ENCODE measurements at regions of chr5 and their contacts with region 1.

Region 1: DNA sequence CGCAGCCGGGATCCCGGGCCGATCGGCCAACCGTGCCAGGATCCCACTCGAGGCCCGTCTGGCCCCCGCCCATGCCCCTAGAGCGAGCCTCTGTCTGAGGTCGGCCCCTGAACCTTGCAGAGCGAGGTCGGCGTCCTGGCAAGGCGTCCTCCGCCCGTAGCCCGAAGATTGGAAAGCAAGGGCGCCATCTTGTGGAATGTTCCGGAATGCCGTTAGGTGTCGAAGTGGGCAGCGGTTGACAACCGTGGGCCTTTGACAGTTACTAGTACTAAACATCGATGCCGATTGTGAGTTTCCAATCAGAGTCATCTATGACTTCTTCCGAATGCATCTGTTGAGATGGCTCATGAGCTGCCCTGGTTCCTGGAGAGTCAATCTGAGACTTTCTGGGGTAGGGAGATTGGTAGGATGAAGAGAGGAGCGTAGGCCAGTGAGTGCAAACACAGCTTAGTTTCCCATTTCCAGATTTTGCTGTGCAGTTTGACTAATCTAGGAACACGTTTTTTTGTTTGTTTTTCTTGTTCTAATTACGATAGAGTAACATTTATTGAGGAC is 923 bp upstream of the PLK2 start:
- DNase-seq: peak; percentile 80 to 94 (median 89)
- ATAC-seq: peak; percentile 69
- H3K4me3 ChIP-seq: peak overlapping the region; percentile 93
- H3K4me3 Mint-ChIP-seq: peak overlapping the region; percentile 92
- H3K27ac ChIP-seq: peak overlapping the region; percentile 74 to 79
- H3K27ac Mint-ChIP-seq: peak overlapping the region; percentile 76
- H3K4me1 ChIP-seq: peaks cover 24% of the 10 kb centered on the region
- H3K4me1 Mint-ChIP-seq: peaks cover 17% of the 10 kb centered on the region
- H3K27me3 ChIP-seq: peaks cover 0 to 5% of the 10 kb centered on the region in 2 experiments
- H3K27me3 Mint-ChIP-seq: peaks cover 17% of the 10 kb centered on the region
- CTCF ChIP-seq: peak; percentile 80

Region 2: GRCh38 chr5:56900858-56901578 is 1559.8 kb before region 1 on chr5:
- CTCF ChIA-PET with region 1: interaction called, 3 read pairs
- POLR2A ChIA-PET with region 1: no interaction called
- intact Hi-C with region 1: loop called (anchors 2 kb)
- DNase-seq: peak in 7 of 14 experiments; percentile 2 to 75 (median 59)
- ATAC-seq: peak; percentile 68
- H3K4me3 ChIP-seq: no peak overlapping the region
- H3K4me3 Mint-ChIP-seq: no peak overlapping the region
- H3K27ac ChIP-seq: no peak overlapping the region
- H3K27ac Mint-ChIP-seq: no peak overlapping the region
- H3K4me1 ChIP-seq: peaks cover 4% of the 10 kb centered on the region
- H3K4me1 Mint-ChIP-seq: no peaks in the 10 kb centered on the region
- H3K27me3 ChIP-seq: no peaks in the 10 kb centered on the region
- H3K27me3 Mint-ChIP-seq: no peaks in the 10 kb centered on the region
- CTCF ChIP-seq: peak; percentile 75

Region 3: GRCh38 chr5:57173185-57174127 is 1287.4 kb before region 1 on chr5 and contains the start of gene GPBP1:
- CTCF ChIA-PET with region 1: no interaction called
- POLR2A ChIA-PET with region 1: interaction called, 6 read pairs
- intact Hi-C with region 1: loop called in 1 of 2 experiments (anchors 5 kb)
- DNase-seq: peak; percentile 94 to 100 (median 97)
- ATAC-seq: peak; percentile 70
- H3K4me3 ChIP-seq: peak within 1 kb of the TSS; percentile 91
- H3K4me3 Mint-ChIP-seq: peak within 1 kb of the TSS; percentile 98
- H3K27ac ChIP-seq: peak within 1 kb of the TSS; percentile 100
- H3K27ac Mint-ChIP-seq: peak within 1 kb of the TSS; percentile 96
- H3K4me1 ChIP-seq: peaks cover 19% of the 10 kb centered on the region
- H3K4me1 Mint-ChIP-seq: peaks cover 41% of the 10 kb centered on the region
- H3K27me3 ChIP-seq: no peaks in the 10 kb centered on the region
- H3K27me3 Mint-ChIP-seq: no peaks in the 10 kb centered on the region
- CTCF ChIP-seq: no peak
- total RNA-seq, gene GPBP1: 136 to 137 TPM

Region 4: GRCh38 chr5:57298295-57298984 is 1162.4 kb before region 1 on chr5:
- CTCF ChIA-PET with region 1: interaction called, 17 read pairs
- POLR2A ChIA-PET with region 1: interaction called, 31 read pairs
- intact Hi-C with region 1: loop called (anchors 1 kb)
- DNase-seq: peak; percentile 66 to 93 (median 81)
- ATAC-seq: peak; percentile 87
- H3K4me3 ChIP-seq: peak overlapping the region; percentile 53
- H3K4me3 Mint-ChIP-seq: peak overlapping the region; percentile 68
- H3K27ac ChIP-seq: peak overlapping the region in 1 of 2 donors; percentile 11
- H3K27ac Mint-ChIP-seq: peak overlapping the region; percentile 64
- H3K4me1 ChIP-seq: peaks cover 13% of the 10 kb centered on the region
- H3K4me1 Mint-ChIP-seq: peaks cover 23% of the 10 kb centered on the region
- H3K27me3 ChIP-seq: no peaks in the 10 kb centered on the region
- H3K27me3 Mint-ChIP-seq: no peaks in the 10 kb centered on the region
- CTCF ChIP-seq: peak; percentile 69

Region 5: DNA sequence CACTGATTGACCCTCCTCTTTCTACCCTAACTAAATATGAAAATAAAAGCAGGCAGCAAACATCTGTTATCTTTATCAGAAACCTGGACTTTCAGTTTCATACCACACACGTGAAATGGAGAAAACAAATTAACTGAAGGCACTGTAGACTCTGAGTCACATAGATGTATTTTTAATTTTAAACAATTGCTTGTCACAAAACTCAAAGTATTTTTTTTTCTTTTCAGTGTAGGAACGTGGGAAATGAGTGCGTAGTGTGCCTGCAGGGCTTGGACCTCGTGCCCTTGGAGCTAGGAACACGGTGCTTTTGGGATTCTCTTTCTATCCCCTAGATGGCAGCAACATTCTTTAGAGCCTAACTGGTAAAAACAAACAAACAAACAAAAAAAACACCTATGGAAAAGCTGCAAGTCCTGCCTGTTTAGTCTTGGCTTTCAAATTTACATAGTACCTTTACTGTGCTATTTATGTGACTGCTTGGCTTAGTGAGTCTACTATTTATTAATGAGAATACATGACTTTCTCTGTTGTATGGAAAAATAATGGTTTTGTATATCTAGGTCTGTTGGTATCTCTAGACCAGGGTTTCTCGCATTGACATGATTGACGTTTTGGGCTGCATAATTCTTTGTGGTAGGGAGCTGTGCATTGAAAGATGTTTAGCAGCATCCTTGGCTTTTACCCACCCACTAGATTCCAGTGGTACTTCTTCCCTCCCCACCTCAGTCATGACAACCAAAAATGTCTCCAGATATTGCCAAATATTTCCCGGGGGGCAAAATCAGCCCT is 961.4 kb before region 1 on chr5:
- CTCF ChIA-PET with region 1: no interaction called
- POLR2A ChIA-PET with region 1: interaction called, 7 read pairs
- intact Hi-C with region 1: loop called (anchors 1 to 2 kb)
- DNase-seq: peak in 4 of 14 experiments; percentile 21 to 49 (median 42)
- ATAC-seq: no peak
- H3K4me3 ChIP-seq: peak overlapping the region; percentile 15
- H3K4me3 Mint-ChIP-seq: peak overlapping the region; percentile 81
- H3K27ac ChIP-seq: no peak overlapping the region
- H3K27ac Mint-ChIP-seq: peak overlapping the region; percentile 54
- H3K4me1 ChIP-seq: peaks cover 13% of the 10 kb centered on the region
- H3K4me1 Mint-ChIP-seq: peaks cover 34% of the 10 kb centered on the region
- H3K27me3 ChIP-seq: no peaks in the 10 kb centered on the region
- H3K27me3 Mint-ChIP-seq: no peaks in the 10 kb centered on the region
- CTCF ChIP-seq: peak; percentile 71

Region 6: DNA sequence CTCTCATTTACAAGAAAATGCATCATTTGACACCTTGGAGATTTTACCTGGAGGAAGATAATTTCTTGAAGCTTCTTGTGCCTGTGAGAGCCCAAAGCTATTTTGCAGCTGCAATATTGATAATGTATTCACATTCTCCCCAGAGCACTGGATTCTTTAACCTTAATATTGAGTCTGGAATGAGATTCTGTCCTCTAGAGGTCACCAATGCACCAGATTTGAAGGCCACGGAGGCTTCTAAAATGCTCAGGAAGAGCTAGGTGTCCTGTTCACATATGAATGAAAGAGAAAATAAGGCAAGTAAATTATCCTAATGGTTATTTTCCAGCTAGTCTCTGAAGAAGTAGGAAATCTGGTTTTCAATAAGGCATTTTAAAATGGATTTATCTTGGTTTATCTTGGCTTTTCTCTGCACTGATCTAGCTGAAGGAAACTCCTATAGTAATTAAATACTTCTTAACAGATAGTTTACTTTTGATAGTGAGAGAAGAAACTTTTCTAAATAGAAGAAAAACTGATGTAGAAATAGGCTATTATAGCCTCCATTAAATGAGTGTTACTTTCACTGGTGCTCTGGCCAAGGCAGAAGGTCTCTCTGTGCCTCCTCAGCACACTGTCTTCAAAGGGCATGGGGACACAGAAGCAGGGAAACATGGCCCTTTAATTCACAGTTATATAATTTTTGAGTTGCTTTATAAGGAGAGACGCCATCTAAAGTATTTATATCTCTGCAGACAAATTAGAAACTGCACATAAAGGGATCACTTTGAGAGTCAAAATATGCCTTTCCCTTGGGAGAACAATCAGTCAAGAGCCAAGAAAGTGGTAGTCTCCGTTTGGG is 681.2 kb before region 1 on chr5:
- CTCF ChIA-PET with region 1: interaction called, 4 read pairs
- POLR2A ChIA-PET with region 1: interaction called, 3 read pairs
- intact Hi-C with region 1: loop called (anchors 1 to 2 kb)
- DNase-seq: peak in 4 of 14 experiments; percentile 21 to 47 (median 40)
- ATAC-seq: no peak
- H3K4me3 ChIP-seq: no peak overlapping the region
- H3K4me3 Mint-ChIP-seq: no peak overlapping the region
- H3K27ac ChIP-seq: no peak overlapping the region
- H3K27ac Mint-ChIP-seq: no peak overlapping the region
- H3K4me1 ChIP-seq: no peaks in the 10 kb centered on the region
- H3K4me1 Mint-ChIP-seq: no peaks in the 10 kb centered on the region
- H3K27me3 ChIP-seq: peaks cover 0 to 5% of the 10 kb centered on the region in 2 experiments
- H3K27me3 Mint-ChIP-seq: no peaks in the 10 kb centered on the region
- CTCF ChIP-seq: peak; percentile 49